ENCODE measurements at regions of chr7 and their contacts with region 1.

Region 1: GRCh38 chr7:27586825-27587224 is 75.9 kb downstream of the HIBADH start:
- DNase-seq: no peak
- H3K4me3 ChIP-seq: no peak overlapping the region
- H3K27ac ChIP-seq: no peak overlapping the region
- H3K27me3 ChIP-seq: no peaks in the 10 kb centered on the region
- CTCF ChIP-seq: no peak

Region 2: GRCh38 chr7:27576360-27576944 is 10.4 kb before region 1 on chr7:
- CTCF ChIA-PET with region 1: interaction called, 12 read pairs
- POLR2A ChIA-PET with region 1: no interaction called
- DNase-seq: peak; percentile 3
- H3K4me3 ChIP-seq: no peak overlapping the region
- H3K27ac ChIP-seq: no peak overlapping the region
- H3K27me3 ChIP-seq: no peaks in the 10 kb centered on the region
- CTCF ChIP-seq: peak; percentile 58

Region 3: DNA sequence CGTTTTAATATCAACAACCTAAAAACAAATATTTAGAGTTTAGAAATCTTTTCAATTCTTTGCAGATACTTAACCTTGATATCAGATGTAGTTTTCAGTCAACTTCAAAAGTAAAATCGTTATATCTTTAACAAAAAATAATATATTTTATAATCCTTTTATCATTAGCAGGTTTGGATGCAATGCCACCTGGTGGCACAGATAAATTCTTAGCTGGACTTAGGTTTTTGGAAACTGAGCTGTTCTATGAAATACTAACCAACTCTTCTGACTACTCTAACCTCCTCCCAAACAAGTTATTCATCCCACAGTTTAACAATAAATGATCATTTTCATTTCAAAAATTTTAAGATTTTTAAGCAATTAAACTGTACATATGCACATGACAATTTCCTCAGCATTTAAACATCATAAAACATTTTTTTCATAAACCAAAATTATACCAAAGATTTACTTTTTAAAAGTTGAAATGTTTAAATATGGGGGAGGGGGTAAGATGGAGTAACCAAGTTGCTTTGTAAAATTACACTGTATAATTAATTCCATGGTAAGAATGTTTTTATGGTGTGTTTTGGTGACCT is 19.0 kb after region 1 on chr7:
- CTCF ChIA-PET with region 1: interaction called, 12 read pairs
- POLR2A ChIA-PET with region 1: no interaction called
- DNase-seq: no peak
- H3K4me3 ChIP-seq: no peak overlapping the region
- H3K27ac ChIP-seq: no peak overlapping the region
- H3K27me3 ChIP-seq: no peaks in the 10 kb centered on the region
- CTCF ChIP-seq: peak; percentile 57

Measured in AG04450 (cell line).